Activated T-helper 1 cell treated with anti-CD3 and anti-CD28 coated beads, Interleukin-12 subunit alpha, Interleukin-12 subunit beta, Interleukin-2, Interleukin-4 antibody, amounts not matched to agents 30 ng/mL and 10 ng/mL and 1 ng/mL, durations not matched to agents 14 hours and 24 hours and 36 hours (primary cell): ENCODE measurements at regions of chr12 and their contacts with region 1.

Region 1: GRCh38 chr12:130838951-130839769 is at the start of gene STX2:
- DNase-seq: peak; percentile 87
- H3K4me3 Mint-ChIP-seq: peak within 1 kb of the TSS; percentile 85
- H3K27ac Mint-ChIP-seq: peak within 1 kb of the TSS; percentile 90
- H3K4me1 Mint-ChIP-seq: peaks cover 25% of the 10 kb centered on the region
- H3K27me3 Mint-ChIP-seq: no peaks in the 10 kb centered on the region
- total RNA-seq, gene STX2: 15.9 and 17.9 TPM in 2 replicates

Region 2: DNA sequence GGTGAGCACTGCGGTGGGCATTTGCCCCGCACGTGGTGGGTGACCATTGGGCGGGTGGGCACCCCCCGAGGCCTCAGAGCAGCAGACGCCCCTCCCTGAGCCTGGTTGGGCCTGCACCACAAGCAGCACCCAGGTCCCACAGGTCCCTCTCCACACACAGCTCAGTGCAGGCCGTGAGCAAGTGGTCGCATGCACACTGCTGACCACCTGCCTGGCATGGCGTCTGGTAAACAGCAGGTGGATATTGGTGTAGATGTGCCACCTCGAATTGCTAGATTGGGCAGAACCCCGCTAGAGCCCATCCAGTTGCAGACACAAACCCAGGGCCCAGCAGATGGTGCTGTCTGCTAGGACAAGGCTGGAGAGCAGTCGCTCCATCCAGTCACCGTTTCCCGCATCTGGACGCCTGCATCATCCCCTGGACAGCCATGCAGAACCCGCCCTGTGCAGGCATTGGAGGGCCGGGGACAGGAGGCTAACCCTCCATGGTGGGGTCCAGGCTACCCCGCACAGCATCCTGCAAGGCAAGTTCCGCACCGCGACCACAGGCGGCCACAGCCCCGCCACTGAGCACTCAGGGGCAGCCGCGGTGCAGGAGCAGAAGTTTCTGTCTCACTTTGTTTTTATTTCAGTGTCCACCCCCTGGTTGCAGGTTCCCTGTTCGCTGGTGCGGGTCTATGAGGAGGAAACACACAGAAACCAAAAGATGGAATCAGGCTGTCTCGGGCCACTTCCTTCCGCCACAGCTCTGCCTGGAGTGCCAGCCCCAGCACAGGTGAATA is 77.4 kb before region 1 on chr12:
- intact Hi-C with region 1: loop called (anchors 5 kb)
- DNase-seq: peak; percentile 22
- H3K4me3 Mint-ChIP-seq: peak overlapping the region; percentile 34
- H3K27ac Mint-ChIP-seq: no peak overlapping the region
- H3K4me1 Mint-ChIP-seq: no peaks in the 10 kb centered on the region
- H3K27me3 Mint-ChIP-seq: no peaks in the 10 kb centered on the region

Region 3: GRCh38 chr12:130826149-130826801 is 12.9 kb before region 1 on chr12:
- intact Hi-C with region 1: loop called (anchors 1 kb)
- DNase-seq: peak; percentile 40
- H3K4me3 Mint-ChIP-seq: no peak overlapping the region
- H3K27ac Mint-ChIP-seq: peak overlapping the region; percentile 52
- H3K4me1 Mint-ChIP-seq: peaks cover 5% of the 10 kb centered on the region
- H3K27me3 Mint-ChIP-seq: no peaks in the 10 kb centered on the region